ENCODE measurements at regions of chr20 and their contacts with region 1.

Region 1: GRCh38 chr20:40962730-40963504 is 65.7 kb upstream of the TOP1 start:
- DNase-seq: peak; percentile 81
- H3K4me3 ChIP-seq: no peak overlapping the region; a peak in 1 of 4 replicates
- H3K27ac ChIP-seq: no peak overlapping the region
- H3K4me1 ChIP-seq: no peaks in the 10 kb centered on the region; a peak in 1 of 4 replicates
- H3K27me3 ChIP-seq: no peaks in the 10 kb centered on the region
- CTCF ChIP-seq: peak; percentile 81
- EP300 ChIP-seq: no peak
- RAD21 ChIP-seq: peak; percentile 91

Region 2: GRCh38 chr20:39049684-39050554 is 1913.0 kb before region 1 on chr20:
- CTCF ChIA-PET with region 1: interaction called, 22 read pairs
- POLR2A ChIA-PET with region 1: no interaction called
- DNase-seq: peak; percentile 92
- H3K4me3 ChIP-seq: peak overlapping the region; percentile 60 to 70
- H3K27ac ChIP-seq: peak overlapping the region in 1 of 2 experiments; percentile 53; a peak in 1 of 4 replicates
- H3K4me1 ChIP-seq: peaks cover 0 to 4% of the 10 kb centered on the region in 2 experiments; a peak in 1 of 4 replicates
- H3K27me3 ChIP-seq: no peaks in the 10 kb centered on the region; the same call in 1 of the 2 replicates
- CTCF ChIP-seq: peak; percentile 87
- EP300 ChIP-seq: no peak
- RAD21 ChIP-seq: peak; percentile 84

Region 3: DNA sequence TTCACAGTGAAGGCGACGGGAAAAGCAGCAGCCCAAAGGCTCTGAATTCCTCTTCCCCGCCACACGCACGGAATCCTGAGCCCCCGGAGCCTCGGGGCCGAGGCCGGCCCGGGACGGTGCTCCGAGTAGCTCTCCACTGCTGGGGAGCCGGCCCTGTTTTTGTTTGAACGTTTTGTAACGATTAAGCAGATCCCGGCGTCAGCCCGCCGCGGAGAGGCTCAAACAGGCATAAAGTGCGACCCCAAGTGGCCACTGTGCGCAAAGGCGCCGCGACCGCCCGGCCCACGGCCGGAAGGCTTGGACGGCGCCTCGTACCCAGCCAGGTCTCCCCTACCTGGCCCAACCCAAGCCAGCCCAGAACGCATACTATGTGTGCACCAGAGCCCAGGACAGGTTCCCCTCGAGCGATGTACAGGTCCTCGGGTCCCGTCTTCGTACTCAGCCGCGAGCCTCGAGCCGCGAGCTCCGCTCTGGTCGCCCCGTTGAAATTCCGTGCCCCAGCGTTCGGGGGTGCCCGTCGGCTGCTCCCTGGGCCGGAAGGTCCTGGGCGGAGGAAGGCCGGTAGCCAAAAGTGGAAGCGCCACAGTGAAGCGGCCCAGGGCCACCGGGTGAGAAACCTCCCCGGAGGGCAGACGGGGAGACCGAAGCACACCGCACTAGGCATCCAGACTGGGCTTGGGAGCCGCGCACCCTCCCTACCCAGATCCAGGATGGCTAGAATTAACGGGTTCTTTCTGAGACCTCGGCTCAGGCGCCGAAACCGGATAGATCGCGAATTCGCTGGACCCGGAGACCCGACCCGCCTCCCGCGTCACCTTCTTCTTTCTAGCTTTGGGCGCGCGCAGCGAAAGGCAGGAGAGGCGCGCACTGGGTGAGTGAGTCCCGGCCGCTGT is 272.7 kb before region 1 on chr20:
- CTCF ChIA-PET with region 1: interaction called, 15 read pairs
- POLR2A ChIA-PET with region 1: no interaction called
- DNase-seq: peak; percentile 89
- H3K4me3 ChIP-seq: peak overlapping the region; percentile 55 to 77
- H3K27ac ChIP-seq: peak overlapping the region in 1 of 2 experiments; percentile 85; a peak in 2 of 4 replicates
- H3K4me1 ChIP-seq: peaks cover 0 to 11% of the 10 kb centered on the region in 2 experiments; a peak in 1 of 4 replicates
- H3K27me3 ChIP-seq: peaks cover 61% of the 10 kb centered on the region
- CTCF ChIP-seq: peak; percentile 82
- EP300 ChIP-seq: no peak
- RAD21 ChIP-seq: peak; percentile 89

Region 4: DNA sequence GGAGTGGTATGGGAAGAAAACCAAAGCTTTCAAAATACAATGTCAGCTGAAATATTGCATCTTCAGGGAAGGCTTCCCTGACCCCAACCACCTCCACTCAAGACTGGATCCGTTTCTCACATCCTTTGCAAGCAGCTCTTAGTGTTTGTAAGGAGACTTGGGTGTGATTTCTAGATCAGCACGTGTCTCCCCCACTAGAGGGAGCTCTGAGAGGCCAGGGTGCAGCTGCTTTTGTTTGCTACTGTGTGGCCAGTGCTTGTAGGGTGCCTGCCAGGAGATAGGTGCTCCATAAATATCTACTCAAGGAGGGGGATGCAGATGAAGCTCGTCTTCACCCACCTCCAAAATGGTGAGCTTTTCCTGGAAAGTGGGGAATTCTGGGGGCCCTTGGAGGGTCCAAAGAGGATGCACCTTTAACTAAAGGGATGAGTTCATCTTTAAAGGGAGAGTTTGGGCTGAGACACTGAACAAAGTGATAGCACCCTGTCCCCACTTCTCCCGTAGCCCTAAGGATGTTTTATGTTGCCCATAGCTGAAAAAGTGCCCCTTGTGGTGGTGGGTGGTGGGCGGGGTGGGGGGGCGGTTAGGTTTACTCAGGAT is 221.3 kb before region 1 on chr20:
- CTCF ChIA-PET with region 1: interaction called, 16 read pairs
- POLR2A ChIA-PET with region 1: no interaction called
- DNase-seq: no peak
- H3K4me3 ChIP-seq: no peak overlapping the region
- H3K27ac ChIP-seq: no peak overlapping the region
- H3K4me1 ChIP-seq: peaks cover 0 to 10% of the 10 kb centered on the region in 2 experiments; a peak in 2 of 4 replicates
- H3K27me3 ChIP-seq: no peaks in the 10 kb centered on the region
- CTCF ChIP-seq: peak; percentile 54
- EP300 ChIP-seq: no peak
- RAD21 ChIP-seq: peak; percentile 48

Region 5: DNA sequence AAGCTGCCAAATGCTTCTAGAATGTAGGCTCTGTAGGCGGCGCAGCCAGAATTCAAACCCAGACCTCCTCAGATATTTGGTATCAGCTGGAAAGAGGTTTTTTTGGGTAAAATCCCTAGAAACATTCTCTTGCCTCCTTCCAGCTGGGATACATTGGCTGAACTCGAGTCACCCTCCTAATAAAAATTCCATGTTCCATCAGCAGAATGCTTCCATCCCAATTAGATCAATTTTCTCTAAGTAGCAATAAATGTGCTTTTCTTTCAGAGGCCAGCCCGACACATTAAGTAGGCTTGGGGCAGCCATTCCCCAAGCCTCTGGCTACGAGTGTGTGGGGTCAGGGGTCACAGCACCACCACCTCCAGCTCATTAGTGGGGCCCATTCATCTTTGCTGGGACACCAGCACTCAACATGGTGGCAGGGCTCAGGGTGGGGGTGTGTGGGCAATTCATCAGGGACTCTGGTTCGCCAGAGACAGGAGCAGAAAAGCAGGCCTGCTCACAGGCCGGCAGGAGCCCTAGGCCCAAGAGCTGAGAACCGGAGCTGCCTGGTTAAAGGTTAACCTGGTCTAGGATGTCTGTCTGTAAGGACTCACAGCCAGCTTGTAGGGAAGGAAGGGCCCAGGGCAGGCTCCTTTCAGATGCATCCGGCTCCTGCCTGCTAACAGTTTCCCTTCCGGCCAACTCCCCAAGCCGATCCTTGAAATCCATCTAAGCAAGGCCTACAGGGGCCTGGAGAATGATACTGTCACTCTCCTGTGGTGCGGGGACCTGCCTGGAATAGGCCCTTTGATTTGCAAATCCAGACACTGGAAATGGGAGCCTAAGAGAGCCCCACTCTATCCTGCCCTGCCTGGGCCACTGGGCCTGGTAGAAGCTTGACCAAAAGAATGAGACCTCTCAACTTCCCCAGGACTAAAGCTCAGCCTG is 93.4 kb before region 1 on chr20:
- CTCF ChIA-PET with region 1: no interaction called
- POLR2A ChIA-PET with region 1: no interaction called
- DNase-seq: no peak
- H3K4me3 ChIP-seq: no peak overlapping the region
- H3K27ac ChIP-seq: no peak overlapping the region
- H3K4me1 ChIP-seq: peaks cover 0 to 6% of the 10 kb centered on the region in 2 experiments; a peak in 2 of 4 replicates
- H3K27me3 ChIP-seq: no peaks in the 10 kb centered on the region
- CTCF ChIP-seq: no peak
- EP300 ChIP-seq: no peak
- RAD21 ChIP-seq: no peak

Region 6: GRCh38 chr20:40896814-40897700 is 65.9 kb before region 1 on chr20:
- CTCF ChIA-PET with region 1: interaction called, 15 read pairs
- POLR2A ChIA-PET with region 1: no interaction called
- DNase-seq: peak; percentile 80
- H3K4me3 ChIP-seq: no peak overlapping the region
- H3K27ac ChIP-seq: peak overlapping the region in 1 of 2 experiments; percentile 90; a peak in 2 of 4 replicates
- H3K4me1 ChIP-seq: peaks cover 0 to 18% of the 10 kb centered on the region in 2 experiments; a peak in 2 of 4 replicates
- H3K27me3 ChIP-seq: 0 out of 2 replicates have a peak, but pooled peaks cover 3% of the 10 kb centered on the region
- CTCF ChIP-seq: no peak
- EP300 ChIP-seq: peak in 1 of 2 experiments; percentile 72; a peak in 1 of 4 replicates
- RAD21 ChIP-seq: no peak; the same call in none of the 2 replicates

Region 7: DNA sequence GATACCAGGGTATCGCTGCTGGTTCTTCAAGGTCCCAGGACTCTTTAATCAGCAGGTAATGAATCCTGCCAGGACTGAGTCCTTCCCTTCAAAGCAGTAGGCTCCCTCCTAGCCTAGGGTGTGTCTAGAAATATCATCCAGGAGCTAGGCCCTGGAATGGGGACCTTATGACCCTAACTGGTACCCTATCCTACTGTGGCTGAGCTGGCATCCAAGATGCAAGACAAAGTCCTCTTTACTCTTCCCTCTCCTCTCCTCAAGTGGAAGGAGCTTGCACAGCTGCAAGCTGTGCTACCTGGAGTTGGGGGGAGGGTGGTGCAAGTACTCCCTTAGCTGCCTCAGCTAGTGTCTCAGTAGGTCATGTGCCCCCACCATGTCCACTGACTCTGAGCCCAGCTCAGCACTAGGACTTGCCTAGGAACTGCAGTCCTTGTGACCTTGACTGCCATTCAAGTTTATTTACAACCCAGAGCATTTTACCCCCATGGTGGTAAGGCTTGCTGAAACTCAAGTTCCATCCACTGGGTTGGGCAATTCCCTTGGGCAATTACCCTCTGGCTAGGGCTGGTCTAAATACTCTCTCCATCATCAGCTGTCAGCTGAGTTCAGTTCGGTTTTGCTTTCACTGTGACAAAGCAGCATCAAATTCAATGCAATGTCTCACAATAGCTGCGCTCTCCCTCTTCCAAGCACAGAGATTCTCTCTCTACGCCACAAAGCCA is 17.4 kb after region 1 on chr20:
- CTCF ChIA-PET with region 1: interaction called, 14 read pairs
- POLR2A ChIA-PET with region 1: no interaction called
- DNase-seq: no peak
- H3K4me3 ChIP-seq: no peak overlapping the region
- H3K27ac ChIP-seq: no peak overlapping the region
- H3K4me1 ChIP-seq: no peaks in the 10 kb centered on the region
- H3K27me3 ChIP-seq: no peaks in the 10 kb centered on the region
- CTCF ChIP-seq: no peak
- EP300 ChIP-seq: no peak
- RAD21 ChIP-seq: no peak

Region 8: GRCh38 chr20:41095110-41095969 is 132.4 kb after region 1 on chr20:
- CTCF ChIA-PET with region 1: interaction called, 34 read pairs
- POLR2A ChIA-PET with region 1: no interaction called
- DNase-seq: peak; percentile 58
- H3K4me3 ChIP-seq: no peak overlapping the region
- H3K27ac ChIP-seq: no peak overlapping the region
- H3K4me1 ChIP-seq: peaks cover 9 to 12% of the 10 kb centered on the region in 2 experiments
- H3K27me3 ChIP-seq: no peaks in the 10 kb centered on the region
- CTCF ChIP-seq: peak; percentile 96
- EP300 ChIP-seq: no peak
- RAD21 ChIP-seq: peak; percentile 89

Measured in SK-N-SH (cell line).